ENCODE measurements at regions of chr3 and their contacts with region 1.

Region 1: GRCh38 chr3:46110701-46111493 is 83.6 kb upstream of the XCR1 start:
- DNase-seq: no peak
- ATAC-seq: peak; percentile 74
- H3K4me3 ChIP-seq: no peak overlapping the region
- H3K4me3 Mint-ChIP-seq: peak overlapping the region in 1 of 10 donors; percentile 62
- H3K27ac ChIP-seq: no peak overlapping the region
- H3K27ac Mint-ChIP-seq: peak overlapping the region in 2 of 9 donors; percentile 66 to 92
- H3K4me1 ChIP-seq: peaks cover 9 to 48% of the 10 kb centered on the region in 2 donors
- H3K4me1 Mint-ChIP-seq: peaks cover 10 to 77% (median 17%) of the 10 kb centered on the region in 7 donors
- H3K27me3 ChIP-seq: no peaks in the 10 kb centered on the region
- H3K27me3 Mint-ChIP-seq: peaks cover 0 to 13% (median 0%) of the 10 kb centered on the region in 5 donors

Region 2: DNA sequence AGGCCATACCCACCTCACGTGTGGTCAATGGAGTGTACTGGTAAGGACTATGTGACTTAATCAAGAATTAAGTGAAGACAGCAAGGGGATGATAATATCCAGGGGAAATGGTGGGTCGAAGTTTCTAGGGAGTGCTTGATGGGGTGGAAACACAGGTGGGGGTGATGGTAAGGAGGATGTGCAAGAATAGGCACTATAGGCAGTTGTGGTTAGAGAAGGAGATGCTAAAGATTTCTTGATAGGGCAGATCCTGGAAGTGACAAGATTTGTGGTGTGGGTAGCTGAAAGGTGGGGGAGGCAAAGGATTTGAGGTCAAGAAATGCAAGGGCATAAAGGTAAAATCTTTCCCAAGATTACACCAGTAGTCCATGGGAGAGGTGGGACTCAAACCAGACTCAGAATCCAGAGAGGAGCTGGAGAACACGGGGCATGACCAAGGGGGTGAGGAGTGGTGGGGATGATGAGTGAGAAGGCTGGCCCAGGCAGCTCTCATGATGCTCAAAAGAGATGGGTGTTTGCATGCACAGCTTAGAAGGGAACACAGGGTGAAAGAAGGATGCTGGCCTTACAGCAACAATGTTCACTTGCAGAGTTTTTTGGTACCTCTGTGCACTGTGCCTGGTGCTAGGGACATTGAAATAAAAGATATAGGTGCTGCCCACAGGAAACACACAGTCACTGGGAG is 18.8 kb after region 1 on chr3:
- CTCF ChIA-PET with region 1: no interaction called
- POLR2A ChIA-PET with region 1: no interaction called
- intact Hi-C with region 1: loop called in 1 of 2 experiments (anchors 2 kb)
- DNase-seq: peak in 2 of 9 donors; percentile 2 to 6
- ATAC-seq: peak; percentile 27
- H3K4me3 ChIP-seq: no peak overlapping the region
- H3K4me3 Mint-ChIP-seq: peak overlapping the region in 1 of 10 donors; percentile 55
- H3K27ac ChIP-seq: no peak overlapping the region
- H3K27ac Mint-ChIP-seq: peak overlapping the region in 3 of 9 donors; percentile 1 to 76 (median 19)
- H3K4me1 ChIP-seq: peaks cover 8 to 11% of the 10 kb centered on the region in 2 donors
- H3K4me1 Mint-ChIP-seq: peaks cover 15 to 42% (median 20%) of the 10 kb centered on the region in 7 donors
- H3K27me3 ChIP-seq: no peaks in the 10 kb centered on the region
- H3K27me3 Mint-ChIP-seq: peaks cover 0 to 26% (median 0%) of the 10 kb centered on the region in 5 donors